OCI-LY7 (cell line): ENCODE measurements at regions of chr18 and their contacts with region 1.

Region 1: GRCh38 chr18:623761-624620 is 27.2 kb downstream of the CLUL1 start:
- DNase-seq: peak; percentile 66
- H3K4me3 ChIP-seq: no peak overlapping the region
- H3K27ac ChIP-seq: no peak overlapping the region
- H3K4me1 ChIP-seq: no peaks in the 10 kb centered on the region
- CTCF ChIP-seq: peak; percentile 77

Region 2: DNA sequence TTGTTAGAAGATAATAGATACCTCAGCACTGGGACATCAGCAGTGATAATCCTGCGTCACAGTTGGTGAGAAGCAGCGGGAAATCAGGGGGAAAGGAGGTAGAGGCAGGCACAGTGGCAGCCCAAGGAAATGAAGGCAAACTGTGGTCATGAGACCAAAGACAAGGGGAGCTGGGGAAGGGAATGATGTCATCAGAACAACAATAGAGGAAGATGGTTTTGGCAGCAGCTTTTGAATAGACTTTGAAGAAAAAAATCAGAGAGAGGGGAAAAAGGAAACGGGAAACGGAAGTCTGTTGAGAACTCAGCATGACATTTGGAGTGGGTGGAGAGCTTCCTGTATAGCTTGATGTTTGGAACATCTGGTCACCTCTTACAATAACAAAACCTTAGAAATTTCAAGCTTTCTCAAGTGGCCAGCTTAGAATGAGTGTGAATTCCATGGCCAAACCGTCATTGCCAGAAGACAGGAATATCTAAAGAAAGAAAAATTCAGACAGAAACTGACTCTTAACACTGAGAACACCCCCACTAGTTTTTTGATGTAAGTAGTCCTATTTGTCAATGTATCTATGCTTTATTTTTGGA is 206.4 kb after region 1 on chr18:
- CTCF ChIA-PET with region 1: interaction called, 5 read pairs
- POLR2A ChIA-PET with region 1: no interaction called
- intact Hi-C with region 1: loop called (anchors 1 kb)
- DNase-seq: peak; percentile 23
- H3K4me3 ChIP-seq: no peak overlapping the region
- H3K27ac ChIP-seq: no peak overlapping the region
- H3K4me1 ChIP-seq: peaks cover 6% of the 10 kb centered on the region
- CTCF ChIP-seq: no peak